GM10248 (cell line): ENCODE measurements at regions of chr12 and their contacts with region 1.

Region 1: DNA sequence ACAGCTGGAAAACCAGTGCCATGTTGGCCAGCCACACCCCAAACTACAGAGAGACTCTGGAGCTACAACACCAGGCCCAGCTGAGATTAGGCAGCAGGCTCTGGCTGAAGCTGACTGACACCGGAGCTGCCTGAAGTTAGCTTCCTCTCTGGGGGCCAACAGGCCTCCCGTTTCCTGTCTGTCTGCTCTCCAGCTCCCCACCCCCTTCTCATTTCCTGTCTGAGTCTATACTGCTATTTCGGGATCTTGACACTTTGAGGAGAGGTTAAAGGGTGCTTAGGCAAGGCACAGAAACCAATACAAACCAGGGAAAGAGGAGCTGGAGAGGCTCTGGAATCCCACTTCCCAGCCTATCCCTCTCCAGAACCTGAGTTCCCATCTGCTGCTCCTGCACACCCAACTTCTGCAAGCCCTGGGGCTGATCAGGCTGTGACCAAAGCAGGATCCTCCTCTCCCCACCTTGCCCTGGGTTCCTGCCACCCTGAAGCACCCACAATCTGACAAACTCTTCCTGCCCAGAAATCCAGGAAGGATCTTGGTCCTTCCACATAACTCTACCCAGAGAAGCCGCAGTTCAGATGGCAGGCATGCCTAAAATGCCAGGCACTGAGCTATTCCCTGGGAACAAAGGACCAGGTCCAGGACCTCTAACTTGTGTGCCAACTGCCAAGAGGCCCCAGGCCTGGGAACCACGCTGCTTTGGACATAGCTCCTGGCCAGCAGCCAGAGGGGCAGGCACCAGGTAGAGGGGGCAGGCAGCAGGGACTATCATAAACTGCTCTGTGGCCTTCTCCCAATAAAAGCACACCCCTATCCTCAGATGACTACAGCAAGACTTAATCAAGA is 39.9 kb downstream of the PRPF40B start:
- DNase-seq: peak; percentile 87
- CTCF ChIP-seq: no peak

Region 2: DNA sequence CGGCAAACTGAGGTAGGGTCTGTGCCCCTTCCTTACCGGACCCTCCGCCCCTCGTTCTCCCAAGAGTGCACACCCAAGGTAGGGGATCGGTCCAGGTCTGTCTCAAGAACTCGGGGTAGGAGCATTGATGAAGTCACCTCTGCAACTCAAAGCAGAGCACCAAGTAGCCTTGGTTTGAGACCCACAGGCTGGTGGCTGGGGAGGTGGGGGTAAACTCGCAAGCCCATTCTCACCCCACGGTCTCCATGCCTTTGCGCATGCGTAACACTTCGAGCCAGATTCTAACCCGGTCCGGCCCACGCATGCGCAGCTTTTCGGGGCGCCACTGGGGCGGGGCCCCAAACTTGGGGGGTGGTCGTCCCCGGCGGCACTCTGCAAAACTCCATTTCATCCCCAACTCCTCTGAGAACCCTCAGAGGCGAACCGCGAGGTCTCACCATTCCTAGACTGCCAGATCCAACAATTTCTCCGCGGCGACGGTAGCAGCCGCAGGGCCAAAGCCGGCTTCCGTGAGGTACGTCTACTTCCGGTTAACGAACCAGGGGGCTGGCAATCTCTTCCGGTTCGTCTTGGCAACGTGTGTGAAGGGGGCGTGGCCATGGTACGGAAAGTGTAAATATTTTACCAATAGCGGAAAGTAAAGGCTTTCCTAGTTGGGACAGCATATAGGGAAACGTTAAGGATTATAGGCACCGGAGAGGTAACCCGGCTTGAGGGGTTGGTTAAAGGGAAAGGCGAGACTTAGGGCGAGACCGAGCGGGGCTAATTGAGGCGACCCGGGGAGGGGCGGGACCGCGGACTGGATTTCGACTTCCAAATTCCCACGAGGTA is 95.4 kb before region 1 on chr12 and contains the start of gene MCRS1:
- CTCF ChIA-PET with region 1: no interaction called
- POLR2A ChIA-PET with region 1: no interaction called
- DNase-seq: peak; percentile 97
- CTCF ChIP-seq: no peak

Region 3: GRCh38 chr12:49651855-49652254 is 11.4 kb before region 1 on chr12:
- CTCF ChIA-PET with region 1: interaction called, 25 read pairs
- POLR2A ChIA-PET with region 1: no interaction called
- DNase-seq: no peak
- CTCF ChIP-seq: no peak

Region 4: DNA sequence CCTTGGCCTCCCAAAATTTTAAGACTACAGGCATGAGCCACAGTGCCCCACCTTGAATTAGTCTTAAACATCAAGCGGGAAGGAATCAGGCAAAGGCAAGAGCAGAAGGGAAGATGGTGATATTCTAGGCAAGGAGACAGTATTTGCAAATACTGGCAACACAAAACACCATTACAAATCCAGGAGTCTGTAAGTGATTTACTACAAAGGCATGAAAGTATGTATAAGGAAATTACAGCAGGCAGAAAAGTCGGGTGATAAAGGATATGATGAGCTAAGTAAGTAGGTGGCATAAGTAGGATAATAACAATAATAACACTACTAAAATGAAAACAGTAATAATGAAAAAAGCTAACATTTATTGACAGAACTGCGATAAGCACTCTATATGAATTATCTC is 15.5 kb after region 1 on chr12:
- CTCF ChIA-PET with region 1: interaction called, 35 read pairs
- POLR2A ChIA-PET with region 1: no interaction called
- DNase-seq: no peak
- CTCF ChIP-seq: no peak

Region 5: DNA sequence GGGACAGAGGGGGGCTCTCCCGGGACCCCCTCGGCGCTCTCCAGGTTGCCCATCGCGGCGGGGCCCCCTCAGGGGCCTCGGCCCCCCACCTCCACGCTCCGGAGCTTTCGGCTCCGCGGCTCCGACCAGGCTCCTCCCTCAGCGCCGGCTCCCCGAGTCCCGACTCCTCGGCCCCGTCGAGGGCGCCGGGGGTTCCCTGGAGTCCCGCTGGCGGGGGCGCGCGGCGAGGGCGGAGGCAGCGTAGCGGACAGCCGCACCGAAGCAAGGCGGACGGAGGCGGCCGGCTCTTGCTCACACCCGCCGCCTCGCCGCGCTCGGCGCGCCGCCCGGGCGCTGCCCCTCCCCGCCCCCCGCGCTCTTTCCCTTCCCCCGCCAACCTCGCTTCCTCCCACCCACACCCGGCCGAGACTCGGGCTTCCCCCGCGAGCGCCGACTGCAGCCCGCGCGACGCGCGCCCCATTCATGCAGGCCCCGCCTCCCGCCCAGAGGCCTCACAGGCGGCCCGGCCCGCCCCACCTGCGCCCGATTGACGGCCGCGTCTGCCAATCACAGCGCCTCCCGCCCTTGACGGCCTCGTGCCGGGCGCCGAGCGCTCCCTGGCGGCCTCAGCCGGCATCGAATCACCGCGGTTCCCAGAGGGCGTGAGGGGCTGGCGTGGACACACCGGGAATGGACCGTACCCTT is 44.0 kb after region 1 on chr12 and contains the start of gene FMNL3:
- CTCF ChIA-PET with region 1: interaction called, 131 read pairs
- POLR2A ChIA-PET with region 1: no interaction called
- DNase-seq: peak; percentile 99
- CTCF ChIP-seq: peak; percentile 91

Region 6: DNA sequence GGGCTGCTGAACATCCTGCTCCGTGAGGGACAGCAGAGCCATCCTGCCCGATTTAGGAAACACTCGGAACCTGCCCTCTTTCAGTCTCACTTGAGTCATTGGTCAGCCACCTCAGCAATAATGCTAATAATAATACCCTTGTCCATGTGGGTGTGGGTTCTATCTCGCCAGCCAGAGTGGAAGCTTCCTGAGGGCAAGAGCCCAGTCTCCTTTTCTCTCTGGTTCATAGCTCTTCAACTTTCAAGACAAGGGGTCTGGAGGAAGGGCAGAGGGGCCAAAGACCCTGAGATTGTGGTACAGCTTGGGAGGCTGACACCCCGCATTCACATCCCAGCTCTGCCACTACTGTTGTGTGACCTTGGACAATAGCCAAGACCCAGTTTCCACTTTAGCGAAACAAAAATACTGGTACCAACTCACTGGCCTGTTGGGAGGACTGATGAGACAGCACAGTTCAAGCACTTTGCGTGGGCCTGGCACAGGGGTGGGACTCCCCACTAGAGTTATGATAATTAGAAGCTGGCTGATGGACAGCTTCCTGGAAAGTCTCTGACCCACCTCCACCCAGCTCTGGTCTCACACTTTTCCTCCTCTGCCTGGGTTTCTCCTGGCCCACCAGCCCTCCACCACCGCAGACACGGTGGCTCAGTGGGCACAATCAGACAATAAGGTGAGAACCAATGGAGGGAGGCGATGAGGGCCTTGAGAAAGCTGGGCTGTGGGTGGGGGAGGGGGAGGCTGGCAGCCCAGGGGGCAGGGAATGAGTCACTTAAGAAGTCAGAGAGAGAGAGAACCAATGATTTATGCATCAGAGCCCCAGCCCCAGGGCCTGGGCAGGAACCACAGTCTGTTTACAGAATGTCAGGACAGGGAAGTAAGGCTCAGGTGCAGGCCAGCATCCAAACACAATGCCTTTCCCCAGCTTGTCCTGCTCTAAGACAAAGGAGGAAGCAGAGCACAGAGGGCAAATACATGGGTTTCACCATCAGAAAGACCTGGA is 230.8 kb after region 1 on chr12:
- CTCF ChIA-PET with region 1: no interaction called
- POLR2A ChIA-PET with region 1: no interaction called
- DNase-seq: no peak
- CTCF ChIP-seq: no peak